CD8-positive, alpha-beta T cell (primary cell): ENCODE measurements at regions of chr20 and their contacts with region 1.

Region 1: GRCh38 chr20:60210779-60211617 is 252.8 kb downstream of the CDH26 start:
- DNase-seq: peak; percentile 34 to 71 (median 60)
- ATAC-seq: no peak
- H3K4me3 ChIP-seq: no peak overlapping the region
- H3K4me3 Mint-ChIP-seq: no peak overlapping the region
- H3K27ac ChIP-seq: no peak overlapping the region
- H3K27ac Mint-ChIP-seq: no peak overlapping the region
- H3K4me1 ChIP-seq: no peaks in the 10 kb centered on the region
- H3K4me1 Mint-ChIP-seq: peaks cover 4% of the 10 kb centered on the region
- H3K27me3 ChIP-seq: no peaks in the 10 kb centered on the region
- H3K27me3 Mint-ChIP-seq: no peaks in the 10 kb centered on the region
- CTCF ChIP-seq: peak; percentile 81

Region 2: GRCh38 chr20:60192326-60192725 is 18.7 kb before region 1 on chr20:
- CTCF ChIA-PET with region 1: interaction called, 11 read pairs
- POLR2A ChIA-PET with region 1: no interaction called
- intact Hi-C with region 1: no loop called
- DNase-seq: no peak
- ATAC-seq: no peak
- H3K4me3 ChIP-seq: no peak overlapping the region
- H3K4me3 Mint-ChIP-seq: no peak overlapping the region
- H3K27ac ChIP-seq: no peak overlapping the region
- H3K27ac Mint-ChIP-seq: no peak overlapping the region
- H3K4me1 ChIP-seq: no peaks in the 10 kb centered on the region
- H3K4me1 Mint-ChIP-seq: no peaks in the 10 kb centered on the region
- H3K27me3 ChIP-seq: no peaks in the 10 kb centered on the region
- H3K27me3 Mint-ChIP-seq: peaks cover 9% of the 10 kb centered on the region
- CTCF ChIP-seq: no peak

Region 3: DNA sequence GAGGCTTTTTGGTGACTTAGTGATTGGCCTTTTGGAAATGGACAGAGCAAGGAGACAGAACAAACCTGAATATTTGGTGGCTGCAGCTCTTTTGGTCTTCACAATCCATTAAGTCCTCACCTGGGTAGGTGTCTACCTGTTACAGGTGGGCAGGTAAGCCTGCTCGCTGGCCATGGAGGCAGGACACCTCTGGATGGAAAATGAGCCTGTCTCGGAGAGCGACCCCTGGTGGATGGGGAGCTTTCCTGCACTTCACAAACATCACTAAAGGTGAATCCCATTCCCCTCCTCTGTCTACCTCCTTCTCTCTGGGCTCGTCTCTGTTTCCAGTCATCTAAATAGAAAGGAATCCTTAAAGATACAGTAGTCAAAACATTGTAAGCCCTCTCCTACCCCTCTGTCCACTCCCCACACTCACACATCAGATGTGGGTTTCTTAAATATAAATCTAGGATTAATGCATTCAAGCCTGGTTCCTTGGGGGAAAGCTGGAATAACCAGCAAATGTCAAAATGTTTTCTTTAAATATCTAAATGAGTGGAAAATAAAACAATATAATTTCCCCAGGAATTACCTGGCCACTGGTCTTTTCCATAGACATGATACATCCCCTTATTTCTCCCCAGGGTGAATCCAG is 52.1 kb after region 1 on chr20:
- CTCF ChIA-PET with region 1: interaction called, 4 read pairs
- POLR2A ChIA-PET with region 1: interaction called, 3 read pairs
- intact Hi-C with region 1: loop called in 1 of 2 experiments (anchors 1 kb)
- DNase-seq: peak; percentile 6 to 70 (median 56)
- ATAC-seq: no peak
- H3K4me3 ChIP-seq: no peak overlapping the region
- H3K4me3 Mint-ChIP-seq: no peak overlapping the region
- H3K27ac ChIP-seq: no peak overlapping the region
- H3K27ac Mint-ChIP-seq: no peak overlapping the region
- H3K4me1 ChIP-seq: peaks cover 22% of the 10 kb centered on the region
- H3K4me1 Mint-ChIP-seq: peaks cover 19% of the 10 kb centered on the region
- H3K27me3 ChIP-seq: no peaks in the 10 kb centered on the region
- H3K27me3 Mint-ChIP-seq: no peaks in the 10 kb centered on the region
- CTCF ChIP-seq: peak; percentile 73

Region 4: DNA sequence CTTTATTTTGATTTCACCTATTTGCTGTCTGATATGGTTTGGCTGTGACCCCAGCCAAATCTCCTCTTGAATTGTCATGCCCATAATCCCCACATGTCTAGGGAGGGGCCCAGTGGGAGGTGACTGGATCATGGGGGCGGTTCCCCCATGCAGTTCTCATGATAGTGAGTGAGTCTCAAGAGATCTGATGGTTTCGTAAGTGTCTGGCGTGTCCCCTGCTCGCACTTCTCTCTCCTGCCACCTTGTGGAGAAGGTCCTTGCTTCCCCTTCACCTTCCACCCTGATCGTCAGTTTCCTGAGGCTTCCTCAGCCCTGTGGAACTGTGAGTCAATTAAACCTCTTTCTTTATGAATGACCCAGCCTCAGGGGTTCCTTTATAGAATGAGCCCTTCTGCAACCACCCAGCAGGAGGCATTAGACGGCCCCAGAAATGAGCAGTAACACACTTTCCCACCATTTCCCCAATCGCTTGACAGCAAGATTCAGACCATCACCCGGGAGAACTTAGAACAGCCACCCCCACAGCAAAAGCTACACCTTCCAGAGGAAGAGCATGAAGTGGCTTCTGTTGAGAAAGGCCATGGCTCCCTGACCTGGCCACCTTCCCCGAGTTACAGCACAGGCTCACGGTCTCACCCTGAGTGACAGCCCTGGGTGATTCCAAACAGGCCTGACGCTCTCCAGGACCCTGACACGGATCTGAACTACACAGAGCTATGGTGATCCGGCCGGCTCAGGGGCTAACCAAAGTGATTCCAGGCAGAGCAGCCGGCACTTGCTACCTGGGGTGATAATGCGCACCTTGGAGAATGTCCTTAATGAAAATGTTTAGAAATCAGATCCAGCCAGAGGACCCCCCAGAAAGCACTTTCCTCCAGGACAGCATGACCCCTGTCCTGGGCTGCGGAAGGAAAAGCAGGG is 909.9 kb after region 1 on chr20:
- CTCF ChIA-PET with region 1: no interaction called
- POLR2A ChIA-PET with region 1: no interaction called
- intact Hi-C with region 1: loop called in 1 of 2 experiments (anchors 1 kb)
- DNase-seq: peak in 5 of 9 experiments; percentile 8 to 59 (median 26)
- ATAC-seq: peak; percentile 31
- H3K4me3 ChIP-seq: no peak overlapping the region
- H3K4me3 Mint-ChIP-seq: no peak overlapping the region
- H3K27ac ChIP-seq: no peak overlapping the region
- H3K27ac Mint-ChIP-seq: no peak overlapping the region
- H3K4me1 ChIP-seq: no peaks in the 10 kb centered on the region
- H3K4me1 Mint-ChIP-seq: peaks cover 3% of the 10 kb centered on the region
- H3K27me3 ChIP-seq: no peaks in the 10 kb centered on the region
- H3K27me3 Mint-ChIP-seq: peaks cover 2% of the 10 kb centered on the region
- CTCF ChIP-seq: no peak

Region 5: GRCh38 chr20:61234803-61235113 is 1023.8 kb after region 1 on chr20:
- CTCF ChIA-PET with region 1: interaction called, 3 read pairs
- POLR2A ChIA-PET with region 1: no interaction called
- intact Hi-C with region 1: loop called in 1 of 2 experiments (anchors 2 kb)
- DNase-seq: no peak
- ATAC-seq: no peak
- H3K4me3 ChIP-seq: no peak overlapping the region
- H3K4me3 Mint-ChIP-seq: no peak overlapping the region
- H3K27ac ChIP-seq: no peak overlapping the region
- H3K27ac Mint-ChIP-seq: no peak overlapping the region
- H3K4me1 ChIP-seq: no peaks in the 10 kb centered on the region
- H3K4me1 Mint-ChIP-seq: no peaks in the 10 kb centered on the region
- H3K27me3 ChIP-seq: no peaks in the 10 kb centered on the region
- H3K27me3 Mint-ChIP-seq: peaks cover 4% of the 10 kb centered on the region
- CTCF ChIP-seq: no peak

Region 6: GRCh38 chr20:61896058-61896961 is 1685.3 kb after region 1 on chr20:
- CTCF ChIA-PET with region 1: interaction called, 4 read pairs
- POLR2A ChIA-PET with region 1: no interaction called
- intact Hi-C with region 1: loop called in 1 of 2 experiments (anchors 10 kb)
- DNase-seq: peak in 4 of 9 experiments; percentile 14 to 52 (median 39)
- ATAC-seq: no peak
- H3K4me3 ChIP-seq: no peak overlapping the region
- H3K4me3 Mint-ChIP-seq: no peak overlapping the region
- H3K27ac ChIP-seq: no peak overlapping the region
- H3K27ac Mint-ChIP-seq: no peak overlapping the region
- H3K4me1 ChIP-seq: no peaks in the 10 kb centered on the region
- H3K4me1 Mint-ChIP-seq: no peaks in the 10 kb centered on the region
- H3K27me3 ChIP-seq: no peaks in the 10 kb centered on the region
- H3K27me3 Mint-ChIP-seq: peaks cover 6% of the 10 kb centered on the region
- CTCF ChIP-seq: peak; percentile 43